ENCODE measurements at regions of chr5 and their contacts with region 1.

Region 1: GRCh38 chr5:154754460-154755360 is 467 bp upstream of the LARP1 start:
- DNase-seq: peak; percentile 99
- H3K4me3 ChIP-seq: peak overlapping the region; percentile 98 to 100 (median 99)
- H3K27ac ChIP-seq: peak overlapping the region; percentile 98 to 100 (median 99)
- H3K4me1 ChIP-seq: peaks cover 39 to 53% (median 50%) of the 10 kb centered on the region in 4 donors
- H3K27me3 ChIP-seq: no peaks in the 10 kb centered on the region
- CTCF ChIP-seq: peak in 2 of 3 experiments; percentile 33 to 41
- EP300 ChIP-seq: no peak
- POLR2A ChIP-seq: peak; percentile 78

Region 2: GRCh38 chr5:154683101-154683880 is 71.4 kb before region 1 on chr5:
- intact Hi-C with region 1: loop called (anchors 5 kb)
- DNase-seq: no peak
- H3K4me3 ChIP-seq: peak overlapping the region; percentile 53 to 66 (median 60)
- H3K27ac ChIP-seq: peak overlapping the region; percentile 72 to 83 (median 82)
- H3K4me1 ChIP-seq: peaks cover 8 to 38% (median 29%) of the 10 kb centered on the region in 4 donors
- H3K27me3 ChIP-seq: no peaks in the 10 kb centered on the region
- CTCF ChIP-seq: no peak
- EP300 ChIP-seq: no peak
- POLR2A ChIP-seq: no peak

Region 3: DNA sequence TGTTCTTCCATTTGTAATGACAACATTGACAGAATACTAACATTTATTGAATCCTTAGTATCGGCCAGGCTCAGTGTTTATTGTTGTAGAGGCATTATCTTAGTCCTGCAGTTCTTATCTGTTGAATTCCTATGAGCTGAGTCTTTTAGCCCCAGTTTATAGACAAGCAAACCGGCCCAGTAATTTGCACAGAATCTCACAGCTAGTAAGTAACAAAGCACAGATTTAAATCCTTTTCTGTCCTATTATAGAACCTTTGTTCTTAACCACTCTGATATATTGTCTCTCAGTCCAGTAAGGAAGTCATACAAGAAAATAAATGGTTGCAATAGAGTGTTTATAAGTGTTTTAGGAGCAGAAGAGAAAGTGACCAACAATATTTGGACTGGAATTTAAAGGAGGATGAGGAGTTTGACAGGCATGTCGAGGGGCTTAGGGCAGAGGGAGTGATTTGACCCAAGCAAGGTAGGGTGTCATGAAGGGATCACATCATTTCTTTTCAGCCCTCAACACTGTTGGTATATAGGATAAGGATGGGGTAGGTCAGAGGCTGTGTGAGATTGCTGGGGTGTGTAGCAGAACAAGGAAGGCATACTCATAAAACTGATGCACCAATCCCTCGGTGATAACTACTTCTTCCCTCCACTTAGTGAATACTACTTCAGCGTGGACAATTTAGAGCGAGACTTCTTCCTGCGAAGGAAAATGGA is 40.0 kb after region 1 on chr5:
- intact Hi-C with region 1: loop called (anchors 5 kb)
- DNase-seq: no peak
- H3K4me3 ChIP-seq: no peak overlapping the region
- H3K27ac ChIP-seq: no peak overlapping the region
- H3K4me1 ChIP-seq: peaks cover 15 to 24% (median 18%) of the 10 kb centered on the region in 4 donors
- H3K27me3 ChIP-seq: no peaks in the 10 kb centered on the region
- CTCF ChIP-seq: no peak
- EP300 ChIP-seq: no peak
- POLR2A ChIP-seq: no peak

Region 4: DNA sequence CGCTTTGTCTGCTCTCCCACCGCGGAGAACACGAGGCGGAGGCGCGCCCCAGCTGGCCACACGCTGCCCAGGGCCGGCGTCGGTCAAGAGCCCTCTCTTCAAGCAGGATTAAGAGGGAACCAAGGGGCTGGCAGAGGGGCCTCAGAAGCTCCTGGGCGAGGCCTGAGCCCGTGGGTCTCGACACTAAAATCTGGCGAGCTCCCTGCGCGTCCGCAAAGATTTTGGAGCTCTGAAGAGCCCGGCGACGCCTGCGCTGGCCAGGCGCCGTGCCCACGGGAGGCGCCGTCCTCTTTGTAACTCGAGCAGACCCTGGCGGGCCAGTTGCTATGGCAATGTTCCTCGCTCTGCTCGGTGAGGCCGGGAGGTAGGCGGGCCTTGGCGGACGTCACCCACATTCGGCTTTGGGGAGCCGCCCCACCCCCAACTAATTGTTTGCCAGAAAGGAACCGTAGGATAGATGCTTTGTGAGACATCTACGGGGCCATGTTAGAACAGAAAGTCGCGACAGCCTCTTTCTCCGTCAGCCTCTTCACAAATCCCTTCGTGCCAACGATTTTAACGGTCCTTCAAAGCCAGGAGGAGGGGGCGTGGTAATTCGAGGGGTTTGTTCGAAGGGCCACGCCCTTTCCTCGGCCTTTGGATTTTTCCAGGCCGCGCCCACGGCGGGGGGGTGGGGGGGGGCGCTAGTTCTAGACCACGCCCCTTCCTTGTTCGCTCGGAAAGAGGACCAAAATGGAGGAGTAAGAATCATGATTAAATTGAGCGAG is 103.0 kb after region 1 on chr5:
- intact Hi-C with region 1: loop called (anchors 5 kb)
- DNase-seq: peak; percentile 99
- H3K4me3 ChIP-seq: peak overlapping the region; percentile 71 to 87 (median 76)
- H3K27ac ChIP-seq: peak overlapping the region; percentile 95 to 97 (median 96)
- H3K4me1 ChIP-seq: peaks cover 35 to 48% (median 47%) of the 10 kb centered on the region in 4 donors
- H3K27me3 ChIP-seq: no peaks in the 10 kb centered on the region
- CTCF ChIP-seq: peak in 2 of 3 experiments; percentile 3 to 9
- EP300 ChIP-seq: no peak
- POLR2A ChIP-seq: no peak

Measured in esophagus muscularis mucosa (tissue), 4 donors.